GM10248 (cell line): ENCODE measurements at regions of chr9 and their contacts with region 1.

Region 1: DNA sequence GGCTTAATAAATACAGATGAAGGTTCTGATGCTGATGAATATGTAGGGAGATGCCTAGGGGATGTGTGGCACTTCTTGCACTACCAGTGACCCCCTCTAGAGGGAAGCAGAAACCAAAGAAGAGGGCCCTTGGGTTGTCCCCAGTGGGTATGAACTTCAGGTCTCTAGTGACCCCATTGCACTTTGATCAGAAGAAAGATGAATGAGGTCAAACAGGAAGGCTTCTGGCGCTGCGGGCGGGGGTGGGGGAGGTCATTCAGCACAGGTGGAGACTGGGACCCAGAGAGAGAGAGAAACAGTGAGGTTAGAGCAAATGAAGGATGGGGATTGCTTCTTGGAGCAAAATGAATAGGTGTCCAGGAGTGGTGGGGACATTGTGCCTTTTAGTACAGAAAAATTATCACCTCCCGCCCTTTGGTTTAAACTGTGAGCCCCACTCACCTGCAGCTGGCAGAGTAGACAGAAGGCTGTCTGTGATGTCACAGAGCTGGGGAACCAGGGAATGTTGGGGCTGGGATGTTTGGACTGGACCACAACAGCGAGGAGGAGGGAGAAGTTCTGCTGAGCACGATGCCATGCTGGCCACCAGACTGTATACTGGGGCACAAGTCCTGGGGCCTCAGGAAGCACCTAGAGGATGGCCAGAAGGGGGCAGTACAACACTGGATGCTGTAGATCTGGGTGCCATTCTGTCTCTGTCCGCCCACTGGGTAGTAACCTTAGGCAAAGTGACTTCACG is at the start of gene TEX48:
- DNase-seq: peak; percentile 73
- CTCF ChIP-seq: peak; percentile 87

Region 2: GRCh38 chr9:113993838-113994540 is 687.8 kb before region 1 on chr9:
- CTCF ChIA-PET with region 1: no interaction called
- POLR2A ChIA-PET with region 1: no interaction called
- DNase-seq: no peak
- CTCF ChIP-seq: no peak

Region 3: GRCh38 chr9:114465903-114466530 is 215.7 kb before region 1 on chr9:
- CTCF ChIA-PET with region 1: no interaction called
- POLR2A ChIA-PET with region 1: no interaction called
- DNase-seq: no peak
- CTCF ChIP-seq: no peak

Region 4: DNA sequence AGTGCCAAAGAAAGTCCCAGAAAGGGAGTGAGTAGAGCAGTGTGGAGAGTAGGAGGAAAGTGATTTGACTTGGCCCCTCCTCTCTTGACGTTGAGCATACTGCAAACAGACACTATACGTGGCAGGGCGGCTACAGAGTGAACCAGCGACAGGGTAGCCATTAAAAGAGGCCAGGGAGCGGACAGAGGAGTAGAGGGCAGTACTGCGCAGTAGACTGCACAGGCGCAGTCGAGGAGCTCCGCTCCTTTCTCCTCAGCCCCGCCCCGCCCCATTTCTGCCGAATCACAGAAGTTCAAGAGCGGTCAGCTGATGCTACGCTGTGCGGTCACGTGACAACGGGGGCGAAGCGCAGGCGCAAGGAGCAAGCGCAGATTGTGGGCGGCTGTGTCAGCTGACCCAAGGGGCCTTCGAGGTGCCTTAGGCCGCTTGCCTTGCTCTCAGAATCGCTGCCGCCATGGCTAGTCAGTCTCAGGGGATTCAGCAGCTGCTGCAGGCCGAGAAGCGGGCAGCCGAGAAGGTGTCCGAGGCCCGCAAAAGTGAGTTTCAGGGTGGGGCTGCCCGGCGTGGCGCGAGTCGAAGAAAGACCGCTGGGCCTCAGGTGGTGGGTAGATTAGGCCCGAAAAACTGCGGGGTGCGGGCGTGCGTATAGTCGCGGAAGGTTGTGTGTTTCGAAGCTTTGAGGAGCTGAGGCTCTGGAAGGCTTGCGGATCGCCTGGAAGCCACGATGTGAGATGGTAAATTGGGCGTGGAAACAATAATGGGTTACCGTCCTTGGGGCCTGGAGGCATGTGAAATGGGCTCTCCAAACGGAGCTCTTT is 94.2 kb before region 1 on chr9 and contains the start of gene ATP6V1G1:
- CTCF ChIA-PET with region 1: no interaction called
- POLR2A ChIA-PET with region 1: no interaction called
- DNase-seq: peak; percentile 96
- CTCF ChIP-seq: peak; percentile 16

Region 5: GRCh38 chr9:114603248-114603647 is 78.5 kb before region 1 on chr9:
- CTCF ChIA-PET with region 1: no interaction called
- POLR2A ChIA-PET with region 1: no interaction called
- DNase-seq: no peak
- CTCF ChIP-seq: no peak

Region 6: DNA sequence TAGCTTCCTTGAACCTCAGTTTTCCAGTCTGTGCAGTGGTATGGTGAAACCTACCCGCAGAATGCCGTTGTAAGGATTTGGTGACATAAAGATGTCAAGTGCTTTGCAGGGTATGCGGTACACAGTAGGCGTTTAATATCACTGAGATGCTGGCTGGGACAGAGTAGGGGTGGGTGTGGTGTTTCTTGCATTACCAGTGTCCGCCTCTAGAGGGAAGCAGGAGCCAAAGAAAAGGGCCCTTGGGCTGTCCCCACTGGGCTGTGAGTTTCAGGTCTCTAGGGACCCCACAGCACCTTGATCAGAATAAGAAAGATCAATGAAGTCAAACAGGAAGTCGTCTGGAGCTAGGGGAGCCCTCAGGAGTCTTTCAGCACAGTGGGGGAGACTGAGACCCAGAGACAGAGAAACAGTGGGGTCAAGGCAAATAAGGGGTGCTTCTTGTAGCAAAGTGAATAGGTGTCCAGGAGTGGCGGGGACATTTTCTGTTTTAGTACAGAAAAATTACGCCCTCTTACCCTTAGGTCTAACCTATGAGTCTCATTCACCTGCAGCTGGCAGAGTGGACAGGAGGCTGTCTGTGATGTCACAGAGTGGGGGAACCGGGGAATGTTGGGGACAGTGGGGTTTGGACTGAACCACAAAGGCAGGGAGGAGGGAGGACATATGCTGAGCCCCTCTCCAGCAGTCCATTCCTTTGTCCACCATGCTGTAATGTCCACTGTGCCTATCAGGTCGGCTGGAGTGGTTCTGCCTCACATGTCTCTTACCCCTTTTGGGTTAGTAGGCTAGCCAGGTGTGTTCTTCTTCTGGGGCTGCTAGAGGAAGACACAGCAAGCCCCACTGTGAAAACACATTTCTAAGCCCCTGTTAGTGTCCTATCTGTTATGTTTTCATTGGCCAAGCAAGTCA is 19.4 kb before region 1 on chr9:
- CTCF ChIA-PET with region 1: interaction called, 17 read pairs
- POLR2A ChIA-PET with region 1: no interaction called
- DNase-seq: peak; percentile 79
- CTCF ChIP-seq: peak; percentile 78

Region 7: DNA sequence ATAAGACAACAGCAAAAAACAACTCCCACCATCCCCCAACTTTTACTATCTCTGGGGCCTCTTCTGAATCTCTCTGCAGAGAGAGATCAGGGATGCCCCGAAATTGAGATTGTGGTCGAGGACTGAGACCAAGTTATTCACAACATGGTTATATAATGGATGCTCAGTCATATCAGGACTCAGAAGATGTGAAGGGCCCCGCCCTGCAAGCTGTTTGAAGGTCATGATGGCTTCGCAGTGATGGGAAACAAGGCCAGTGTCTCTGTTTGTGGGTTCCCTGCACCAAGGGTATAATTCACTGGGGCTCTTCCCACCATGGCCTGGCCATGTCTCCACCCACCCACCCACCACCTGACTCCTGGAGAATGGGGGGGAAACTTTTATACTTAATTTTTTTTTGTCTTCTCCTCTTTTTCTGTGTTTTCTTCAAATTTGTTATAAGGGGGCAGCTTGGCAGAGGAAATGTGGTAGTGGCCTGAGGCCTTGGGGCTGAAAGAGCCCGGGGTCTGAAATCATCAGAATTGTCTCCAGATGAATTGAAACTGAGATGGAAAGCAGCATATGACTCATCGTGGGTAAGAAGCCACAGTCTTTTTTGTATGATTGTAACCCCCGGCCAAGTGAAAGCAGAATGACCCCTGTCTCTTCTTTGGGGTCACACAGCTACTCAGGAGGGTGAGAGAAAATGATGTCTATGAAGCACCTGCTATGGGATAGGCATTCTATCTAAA is 15.2 kb after region 1 on chr9:
- CTCF ChIA-PET with region 1: interaction called, 67 read pairs
- POLR2A ChIA-PET with region 1: no interaction called
- DNase-seq: peak; percentile 68
- CTCF ChIP-seq: no peak

Region 8: DNA sequence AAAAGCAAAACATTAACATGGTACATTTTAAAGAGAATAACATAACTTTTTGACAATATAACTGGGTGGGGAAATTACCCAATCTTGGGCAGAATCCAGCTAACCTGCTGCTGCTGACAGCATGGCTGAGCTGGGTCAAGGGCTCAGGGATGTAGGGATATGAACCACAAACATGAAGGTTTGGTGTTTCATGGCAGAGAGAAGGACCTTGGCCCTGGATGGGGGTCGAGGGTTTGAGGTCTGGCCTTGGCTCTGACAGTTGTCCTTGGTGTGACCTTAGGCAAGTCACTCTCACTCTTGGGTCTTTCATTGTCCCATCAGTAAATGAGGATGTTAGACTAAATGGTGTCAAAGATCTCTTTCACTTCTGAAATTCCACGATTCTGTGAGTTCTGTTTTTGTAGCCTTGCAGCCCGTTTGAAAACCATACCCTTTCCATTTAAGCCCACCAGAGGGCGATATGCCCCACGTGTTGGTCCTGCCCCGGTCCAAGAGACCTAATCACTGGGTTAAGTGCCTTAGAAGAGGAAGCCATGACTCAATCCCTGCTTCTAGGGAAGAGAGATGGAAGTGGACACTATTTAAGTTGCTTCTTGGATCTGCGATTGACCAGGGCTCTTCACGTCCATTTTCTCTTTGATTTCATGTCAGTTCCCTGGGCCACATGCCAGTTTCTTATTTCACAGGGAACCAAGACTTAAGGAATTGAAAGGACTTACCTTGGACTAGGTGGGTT is 57.0 kb after region 1 on chr9:
- CTCF ChIA-PET with region 1: interaction called, 39 read pairs
- POLR2A ChIA-PET with region 1: no interaction called
- DNase-seq: peak; percentile 62
- CTCF ChIP-seq: peak; percentile 52

Region 9: DNA sequence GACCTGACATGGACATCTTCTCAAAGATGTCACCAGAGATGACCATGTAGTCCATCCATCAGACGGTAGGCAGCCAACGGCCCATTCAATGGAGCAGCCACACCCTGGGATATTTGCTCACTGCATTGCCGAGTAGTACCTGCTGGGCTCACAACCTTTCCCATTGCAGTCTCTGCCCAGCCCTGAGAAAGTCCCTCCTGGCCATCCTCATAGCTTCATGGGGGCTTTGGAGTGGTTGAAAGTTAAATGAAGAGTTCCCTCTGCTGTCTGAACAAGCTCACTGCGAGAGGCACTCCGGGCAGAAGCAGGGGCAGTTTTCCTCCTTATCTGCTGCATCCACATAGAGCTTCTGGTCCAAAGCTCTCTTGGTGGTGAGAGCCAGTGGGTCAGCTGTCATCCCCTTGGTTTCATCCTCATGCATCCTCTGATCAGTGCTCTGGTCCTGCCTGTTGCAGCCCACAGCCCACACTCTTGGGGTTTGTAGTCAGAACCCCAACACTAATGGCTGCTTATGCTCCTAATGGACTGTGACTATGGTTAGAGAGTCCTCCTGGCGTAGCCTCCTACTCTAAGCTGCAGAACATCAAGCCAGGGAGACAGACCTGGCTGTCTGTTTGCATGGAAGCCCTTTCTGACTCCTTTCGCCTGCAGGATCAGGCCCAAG is 225.3 kb after region 1 on chr9:
- CTCF ChIA-PET with region 1: interaction called, 35 read pairs
- POLR2A ChIA-PET with region 1: no interaction called
- DNase-seq: no peak
- CTCF ChIP-seq: peak; percentile 43

Region 10: GRCh38 chr9:115013998-115014397 is 332.2 kb after region 1 on chr9:
- CTCF ChIA-PET with region 1: interaction called, 75 read pairs
- POLR2A ChIA-PET with region 1: no interaction called
- DNase-seq: peak; percentile 70
- CTCF ChIP-seq: peak; percentile 53